CD8-positive, alpha-beta T cell (primary cell): ENCODE measurements at regions of chr6 and their contacts with region 1.

Region 1: GRCh38 chr6:31958741-31959739 is at the starts of genes NELFE and SKIC2:
- DNase-seq: peak; percentile 97 to 99 (median 99)
- ATAC-seq: peak; percentile 98
- H3K4me3 ChIP-seq: peak within 1 kb of the TSS; percentile 85 to 91
- H3K4me3 Mint-ChIP-seq: peak within 1 kb of the TSS; percentile 95
- H3K27ac ChIP-seq: peak within 1 kb of the TSS; percentile 97 to 99
- H3K27ac Mint-ChIP-seq: peak within 1 kb of the TSS; percentile 97
- H3K4me1 ChIP-seq: peaks cover 25% of the 10 kb centered on the region
- H3K4me1 Mint-ChIP-seq: peaks cover 39% of the 10 kb centered on the region
- H3K27me3 ChIP-seq: no peaks in the 10 kb centered on the region
- H3K27me3 Mint-ChIP-seq: no peaks in the 10 kb centered on the region
- CTCF ChIP-seq: no peak
- total RNA-seq, gene NELFE: 50.4 to 55.1 TPM
- total RNA-seq, gene SKIC2: 107 to 115 TPM

Region 2: GRCh38 chr6:31541658-31542521 is 417.1 kb before region 1 on chr6 and contains the start of gene DDX39B:
- CTCF ChIA-PET with region 1: no interaction called
- POLR2A ChIA-PET with region 1: interaction called, 3 read pairs
- intact Hi-C with region 1: loop called in 1 of 2 experiments (anchors 1 kb)
- DNase-seq: peak; percentile 85 to 98 (median 93)
- ATAC-seq: peak; percentile 67
- H3K4me3 ChIP-seq: peak within 1 kb of the TSS; percentile 76 to 86
- H3K4me3 Mint-ChIP-seq: peak within 1 kb of the TSS; percentile 98
- H3K27ac ChIP-seq: peak within 1 kb of the TSS; percentile 95 to 96
- H3K27ac Mint-ChIP-seq: peak within 1 kb of the TSS; percentile 100
- H3K4me1 ChIP-seq: peaks cover 37% of the 10 kb centered on the region
- H3K4me1 Mint-ChIP-seq: peaks cover 56% of the 10 kb centered on the region
- H3K27me3 ChIP-seq: no peaks in the 10 kb centered on the region
- H3K27me3 Mint-ChIP-seq: no peaks in the 10 kb centered on the region
- CTCF ChIP-seq: no peak
- total RNA-seq, gene DDX39B: 483 to 518 TPM

Region 3: GRCh38 chr6:31665501-31666336 is 293.3 kb before region 1 on chr6 and contains the start of gene CSNK2B:
- CTCF ChIA-PET with region 1: no interaction called
- POLR2A ChIA-PET with region 1: no interaction called
- intact Hi-C with region 1: loop called in 1 of 2 experiments (anchors 5 kb)
- DNase-seq: peak; percentile 95 to 99 (median 98)
- ATAC-seq: peak; percentile 84
- H3K4me3 ChIP-seq: peak within 1 kb of the TSS; percentile 91 to 94
- H3K4me3 Mint-ChIP-seq: peak within 1 kb of the TSS; percentile 95
- H3K27ac ChIP-seq: peak within 1 kb of the TSS; percentile 96 to 99
- H3K27ac Mint-ChIP-seq: peak within 1 kb of the TSS; percentile 98
- H3K4me1 ChIP-seq: peaks cover 44% of the 10 kb centered on the region
- H3K4me1 Mint-ChIP-seq: peaks cover 56% of the 10 kb centered on the region
- H3K27me3 ChIP-seq: no peaks in the 10 kb centered on the region
- H3K27me3 Mint-ChIP-seq: no peaks in the 10 kb centered on the region
- CTCF ChIP-seq: no peak
- total RNA-seq, gene CSNK2B: 80.9 to 86.1 TPM

Region 4: DNA sequence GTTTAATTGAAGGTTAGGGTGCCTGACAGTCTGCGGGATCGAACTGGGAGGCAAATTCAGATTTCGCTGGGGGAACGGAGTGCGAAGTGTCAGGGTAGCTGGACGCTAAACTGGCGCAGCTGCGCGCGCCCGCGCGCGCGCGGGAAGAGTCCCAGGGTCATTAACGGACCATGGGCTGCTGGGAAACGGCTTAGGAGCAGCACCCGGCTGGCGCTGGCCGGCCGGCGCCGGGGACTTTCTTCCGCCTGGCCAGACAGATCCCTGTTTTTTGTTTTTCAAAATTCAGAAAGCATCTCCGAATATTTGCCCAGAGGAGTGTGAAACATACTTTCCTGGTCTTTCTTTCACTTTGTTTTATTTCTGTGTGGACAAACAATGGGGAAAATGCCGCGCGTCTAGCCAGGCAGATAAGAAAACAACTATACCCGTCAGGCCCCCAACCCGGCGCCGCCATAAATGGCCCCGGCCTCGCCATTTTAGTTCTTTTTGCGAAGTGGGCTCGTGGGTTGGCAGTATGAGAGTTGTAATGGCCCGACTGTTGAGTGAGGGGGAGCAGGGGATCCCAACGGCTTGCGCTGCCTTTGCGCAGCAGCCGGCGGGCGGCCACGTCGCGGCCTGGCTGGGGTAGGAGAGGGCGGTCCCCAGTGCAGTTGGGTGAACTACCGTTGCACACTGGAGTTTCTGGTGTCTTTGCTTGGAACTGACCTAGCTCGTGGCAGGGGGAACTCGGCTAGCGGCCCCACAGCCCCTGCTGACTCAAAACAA is 124.4 kb before region 1 on chr6:
- CTCF ChIA-PET with region 1: no interaction called
- POLR2A ChIA-PET with region 1: no interaction called
- intact Hi-C with region 1: loop called in 1 of 2 experiments (anchors 2 kb)
- DNase-seq: peak; percentile 70 to 89 (median 81)
- ATAC-seq: peak; percentile 75
- H3K4me3 ChIP-seq: peak overlapping the region; percentile 84 to 97
- H3K4me3 Mint-ChIP-seq: peak overlapping the region; percentile 98
- H3K27ac ChIP-seq: peak overlapping the region; percentile 93 to 99
- H3K27ac Mint-ChIP-seq: peak overlapping the region; percentile 99
- H3K4me1 ChIP-seq: peaks cover 42% of the 10 kb centered on the region
- H3K4me1 Mint-ChIP-seq: peaks cover 59% of the 10 kb centered on the region
- H3K27me3 ChIP-seq: no peaks in the 10 kb centered on the region
- H3K27me3 Mint-ChIP-seq: no peaks in the 10 kb centered on the region
- CTCF ChIP-seq: no peak

Region 5: DNA sequence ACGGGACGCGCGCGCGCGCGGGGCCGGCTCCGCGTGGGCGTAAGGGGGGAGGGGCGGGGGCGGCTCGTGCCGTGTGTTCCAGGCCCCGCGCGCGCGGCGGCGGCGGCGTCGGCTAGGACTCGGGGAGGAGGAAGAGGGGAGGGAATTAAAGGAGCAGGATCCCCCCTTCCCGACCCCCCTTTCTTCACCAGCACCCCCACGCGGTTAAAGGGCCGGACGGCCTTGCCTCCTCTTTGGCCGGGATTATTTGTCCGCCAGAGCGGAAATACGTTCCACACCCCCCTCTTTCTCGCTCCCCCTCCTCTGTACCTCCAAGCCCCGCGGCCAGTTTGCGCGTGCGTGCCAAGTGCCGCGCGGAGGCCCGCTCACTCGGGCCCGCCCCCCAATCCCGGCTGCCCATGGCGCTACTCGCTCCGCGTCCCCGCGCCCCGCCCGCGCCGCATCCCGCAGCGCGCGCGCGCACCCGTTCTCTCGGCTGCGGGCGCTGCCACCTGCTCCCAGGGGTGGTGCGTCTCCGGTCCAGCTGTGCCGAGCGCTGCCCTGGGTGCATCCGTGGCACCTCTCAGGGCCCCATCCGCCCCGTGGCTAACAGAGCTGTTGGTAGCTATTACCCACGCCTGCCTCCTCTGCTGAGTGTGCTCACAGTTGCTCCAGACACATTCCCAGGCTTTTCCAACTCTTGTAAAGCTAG is 56.9 kb before region 1 on chr6 and contains the start of gene ZBTB12:
- CTCF ChIA-PET with region 1: no interaction called
- POLR2A ChIA-PET with region 1: interaction called, 5 read pairs
- intact Hi-C with region 1: loop called (anchors 1 to 2 kb)
- DNase-seq: peak; percentile 68 to 94 (median 84)
- ATAC-seq: peak; percentile 54
- H3K4me3 ChIP-seq: peak within 1 kb of the TSS; percentile 70 to 97
- H3K4me3 Mint-ChIP-seq: peak within 1 kb of the TSS; percentile 89
- H3K27ac ChIP-seq: peak within 1 kb of the TSS; percentile 47 to 76
- H3K27ac Mint-ChIP-seq: peak within 1 kb of the TSS; percentile 77
- H3K4me1 ChIP-seq: peaks cover 30% of the 10 kb centered on the region
- H3K4me1 Mint-ChIP-seq: peaks cover 32% of the 10 kb centered on the region
- H3K27me3 ChIP-seq: no peaks in the 10 kb centered on the region
- H3K27me3 Mint-ChIP-seq: no peaks in the 10 kb centered on the region
- CTCF ChIP-seq: no peak
- total RNA-seq, gene ZBTB12: 0.27 TPM in 1 of 2 experiments, not detected in the other

Region 6: GRCh38 chr6:32177788-32178546 is 218.9 kb after region 1 on chr6 and contains the start of gene RNF5:
- CTCF ChIA-PET with region 1: no interaction called
- POLR2A ChIA-PET with region 1: no interaction called
- intact Hi-C with region 1: loop called (anchors 2 to 5 kb)
- DNase-seq: peak; percentile 84 to 100 (median 93)
- ATAC-seq: peak; percentile 83
- H3K4me3 ChIP-seq: peak within 1 kb of the TSS; percentile 72 to 82
- H3K4me3 Mint-ChIP-seq: peak within 1 kb of the TSS; percentile 93
- H3K27ac ChIP-seq: peak within 1 kb of the TSS; percentile 89 to 98
- H3K27ac Mint-ChIP-seq: peak within 1 kb of the TSS; percentile 96
- H3K4me1 ChIP-seq: peaks cover 59% of the 10 kb centered on the region
- H3K4me1 Mint-ChIP-seq: peaks cover 69% of the 10 kb centered on the region
- H3K27me3 ChIP-seq: no peaks in the 10 kb centered on the region
- H3K27me3 Mint-ChIP-seq: no peaks in the 10 kb centered on the region
- CTCF ChIP-seq: no peak
- total RNA-seq, gene RNF5: 10.0 to 11.5 TPM